BJ (cell line): ENCODE measurements at regions of chr12 and their contacts with region 1.

Region 1: DNA sequence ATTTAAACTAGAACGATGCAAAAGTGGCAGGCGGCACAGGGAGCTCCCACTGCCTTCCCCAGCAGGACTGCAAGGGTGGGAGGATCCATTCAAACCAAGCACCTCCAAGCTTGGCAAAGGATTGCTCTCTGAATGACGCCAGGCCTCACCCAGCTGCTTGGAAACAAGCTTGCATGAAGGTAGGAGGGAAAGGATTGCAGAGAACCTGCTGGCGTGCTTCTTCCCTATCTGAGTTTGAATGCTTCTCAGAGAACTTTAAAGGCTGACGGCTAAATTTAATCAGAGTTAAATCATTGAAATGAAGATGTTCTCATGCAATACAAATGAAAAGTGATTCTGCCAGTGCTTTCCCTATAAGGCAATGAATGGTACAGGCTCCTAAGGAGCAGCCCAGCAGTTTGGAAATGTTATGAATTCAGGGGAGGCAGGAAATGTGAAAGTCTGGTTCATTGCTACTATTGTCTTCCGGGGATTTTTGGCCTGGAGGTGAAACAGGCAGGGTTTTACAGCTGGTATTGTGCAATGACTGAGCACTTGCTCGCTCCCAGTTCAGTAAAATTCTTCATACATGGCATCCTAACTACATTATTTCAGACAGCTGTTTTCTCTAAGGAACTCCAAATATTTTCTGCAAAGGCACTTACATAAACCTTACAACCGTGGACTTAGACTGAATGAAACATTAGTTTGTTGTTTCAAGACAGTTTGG is 31.9 kb upstream of the DUSP6 start:
- DNase-seq: peak; percentile 92
- H3K4me3 ChIP-seq: no peak overlapping the region
- H3K27me3 ChIP-seq: no peaks in the 10 kb centered on the region; the same call in 1 of the 2 replicates
- CTCF ChIP-seq: no peak

Region 2: GRCh38 chr12:89352492-89353187 is 31.6 kb before region 1 on chr12 and contains the start of gene DUSP6:
- CTCF ChIA-PET with region 1: interaction called, 10 read pairs
- POLR2A ChIA-PET with region 1: no interaction called
- DNase-seq: peak; percentile 97
- H3K4me3 ChIP-seq: peak within 1 kb of the TSS; percentile 89
- H3K27me3 ChIP-seq: no peaks in the 10 kb centered on the region
- CTCF ChIP-seq: no peak
- polyA plus RNA-seq, gene DUSP6: 26.6 and 30.8 TPM in 2 replicates